Posterior cingulate gyrus (tissue), 11 donors: ENCODE measurements at regions of chr11 and their contacts with region 1.

Region 1: GRCh38 chr11:34357701-34358257 is at the start of gene ABTB2:
- DNase-seq: peak; percentile 97 to 100 (median 98)

Region 2: GRCh38 chr11:33670250-33671011 is 687.3 kb before region 1 on chr11:
- intact Hi-C with region 1: no loop called
- DNase-seq: no peak

Region 3: DNA sequence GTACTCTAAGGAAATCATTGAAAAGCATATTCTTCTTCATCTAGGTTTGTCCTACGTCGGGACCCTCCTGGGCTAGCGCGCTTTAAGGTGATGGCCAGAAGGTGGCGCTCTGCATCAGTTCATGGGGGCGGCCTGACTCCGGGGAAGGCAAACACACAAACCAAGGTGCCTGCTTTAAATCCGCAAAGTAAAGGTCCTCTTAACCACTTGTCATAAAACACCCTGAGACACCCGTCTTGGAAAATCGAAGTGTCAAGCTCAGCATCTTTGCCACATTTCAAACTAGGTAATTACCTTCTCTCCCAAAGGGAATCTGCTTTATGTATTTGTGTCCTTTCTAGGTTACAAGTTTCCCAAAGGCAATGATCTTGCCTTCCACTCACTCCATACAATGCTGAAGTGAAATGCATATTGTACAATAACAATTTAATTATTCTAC is 499.8 kb before region 1 on chr11:
- intact Hi-C with region 1: loop called (anchors 5 kb)
- DNase-seq: peak; percentile 43 to 95 (median 75)

Region 4: DNA sequence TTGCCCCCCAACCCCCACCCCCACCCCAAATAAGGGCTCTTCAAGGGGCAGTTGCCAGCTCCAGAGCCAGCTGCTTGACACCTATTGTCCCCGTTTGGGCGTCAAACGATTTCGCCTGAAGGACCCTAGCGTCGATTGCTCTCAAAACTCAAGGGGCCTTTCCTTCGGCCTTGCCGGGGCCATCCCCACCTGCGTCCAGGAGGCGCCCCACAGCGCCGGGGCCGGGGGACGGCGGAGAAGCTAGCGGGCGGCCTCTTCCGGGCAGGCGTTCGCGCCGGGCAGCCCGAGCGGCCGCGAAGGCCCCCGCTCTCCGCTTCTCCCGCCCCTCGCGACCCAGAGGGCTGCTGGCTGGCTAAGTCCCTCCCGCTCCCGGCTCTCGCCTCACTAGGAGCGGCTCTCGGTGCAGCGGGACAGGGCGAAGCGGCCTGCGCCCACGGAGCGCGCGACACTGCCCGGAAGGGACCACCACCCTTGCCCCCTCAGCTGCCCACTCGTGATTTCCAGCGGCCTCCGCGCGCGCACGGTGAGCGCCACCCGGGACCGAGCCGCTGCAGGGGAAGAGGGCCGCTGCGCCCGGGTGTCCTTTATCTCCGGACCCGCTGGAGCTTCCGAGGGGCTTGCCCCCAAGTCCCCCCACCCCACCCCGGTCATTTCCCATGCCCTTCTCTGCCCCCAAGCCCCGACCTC is 306.3 kb before region 1 on chr11 and contains the start of gene CAPRIN1:
- intact Hi-C with region 1: loop called (anchors 5 kb)
- DNase-seq: peak; percentile 74 to 98 (median 86)

Region 5: GRCh38 chr11:34105079-34105956 is 252.5 kb before region 1 on chr11 and contains the start of gene NAT10:
- intact Hi-C with region 1: loop called (anchors 5 kb)
- DNase-seq: peak; percentile 91 to 99 (median 93)

Region 6: DNA sequence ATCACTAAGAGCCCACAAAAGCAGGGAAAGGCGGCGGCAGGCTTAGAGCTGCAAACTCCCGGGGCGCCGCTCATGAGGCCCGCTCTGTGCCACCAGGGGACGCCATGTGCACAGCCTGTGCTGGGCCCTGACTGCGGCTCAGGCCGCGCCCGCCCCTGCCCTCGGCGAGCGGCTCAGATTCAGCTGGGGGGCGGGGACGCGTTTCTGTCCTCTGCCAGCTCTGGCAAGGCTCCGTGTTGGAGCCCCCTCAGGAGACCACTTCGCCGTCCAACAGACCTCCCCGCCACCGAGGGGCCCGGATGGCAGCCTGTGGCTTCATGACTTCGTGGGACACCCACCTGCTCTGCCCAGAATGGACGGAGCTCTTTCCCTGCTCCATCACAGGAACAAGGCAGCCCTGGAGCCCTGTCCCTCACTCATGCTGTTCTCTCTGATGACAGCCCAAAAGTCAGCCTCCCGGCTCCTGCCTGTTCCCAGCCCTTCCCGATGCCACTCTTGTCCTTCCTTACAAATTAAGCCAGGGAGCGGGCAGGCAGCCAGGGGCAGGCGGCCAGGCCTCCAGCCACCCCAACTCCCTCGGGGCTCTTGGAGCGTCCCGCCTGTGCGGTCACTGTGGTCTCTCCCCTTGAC is 183.3 kb before region 1 on chr11:
- intact Hi-C with region 1: loop called (anchors 1 kb)
- DNase-seq: peak; percentile 70 to 98 (median 87)

Region 7: DNA sequence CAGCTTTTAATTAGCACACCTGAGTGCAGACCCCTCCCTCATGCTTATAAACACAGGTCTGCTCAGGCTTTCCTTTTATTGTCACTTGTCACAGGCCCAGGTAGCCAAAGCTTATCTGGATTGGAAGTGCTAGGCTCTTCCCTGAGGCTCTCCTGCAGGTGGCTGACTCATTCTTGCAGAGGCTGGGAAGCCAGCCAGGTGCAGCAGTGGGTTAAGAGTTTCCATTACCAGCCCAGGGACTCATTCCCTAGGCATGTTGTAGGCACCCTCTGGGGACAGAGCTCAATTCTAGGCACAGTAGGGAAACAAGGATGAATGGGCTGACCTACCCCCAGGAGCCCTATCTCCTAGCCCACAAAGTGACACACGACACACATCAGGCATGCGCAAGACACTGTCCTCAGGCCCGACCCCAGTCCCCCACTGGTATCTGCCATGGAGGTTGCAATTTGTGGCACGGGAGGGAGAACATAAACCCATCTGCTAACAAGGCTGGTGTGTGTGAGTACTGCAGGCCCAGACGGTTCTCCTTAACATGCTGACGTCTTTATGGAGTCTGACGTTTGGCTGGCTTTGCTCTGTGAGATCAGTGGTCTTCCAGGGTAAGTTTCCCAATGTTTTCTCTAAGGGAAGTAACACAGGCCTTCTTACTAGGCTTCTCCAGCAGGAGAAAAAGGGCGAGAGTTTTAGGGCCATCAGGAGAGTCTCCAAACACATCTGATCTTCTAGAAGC is 94.2 kb before region 1 on chr11:
- intact Hi-C with region 1: loop called (anchors 2 kb)
- DNase-seq: peak in 2 of 10 donors; percentile 37 to 84

Region 8: DNA sequence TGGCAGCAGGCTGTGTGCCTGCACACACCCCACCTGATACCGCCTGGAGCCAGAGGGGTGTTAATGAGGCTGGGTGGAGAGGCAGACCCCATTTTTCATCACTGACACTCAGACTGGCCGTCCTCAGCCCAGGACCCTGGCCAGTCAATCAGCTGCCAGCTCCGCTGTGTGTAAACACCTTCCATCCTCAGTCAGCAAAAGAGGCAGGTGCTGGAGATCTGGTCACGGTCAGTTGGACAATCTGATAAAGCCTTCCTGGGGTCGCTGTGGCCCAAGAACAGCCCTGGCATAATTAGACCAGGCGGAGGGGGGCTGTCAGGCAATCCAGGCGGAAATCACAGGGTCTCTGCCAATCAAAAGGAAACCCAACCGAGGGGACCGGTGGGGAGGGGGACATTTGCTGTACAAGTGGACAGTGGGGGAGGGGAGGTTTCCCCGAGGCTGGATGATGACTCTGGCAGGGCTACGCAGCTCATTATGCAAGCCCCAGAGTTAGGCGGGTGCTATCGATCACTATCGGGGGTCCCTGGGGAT is 72.9 kb before region 1 on chr11:
- intact Hi-C with region 1: no loop called
- DNase-seq: no peak

Region 9: DNA sequence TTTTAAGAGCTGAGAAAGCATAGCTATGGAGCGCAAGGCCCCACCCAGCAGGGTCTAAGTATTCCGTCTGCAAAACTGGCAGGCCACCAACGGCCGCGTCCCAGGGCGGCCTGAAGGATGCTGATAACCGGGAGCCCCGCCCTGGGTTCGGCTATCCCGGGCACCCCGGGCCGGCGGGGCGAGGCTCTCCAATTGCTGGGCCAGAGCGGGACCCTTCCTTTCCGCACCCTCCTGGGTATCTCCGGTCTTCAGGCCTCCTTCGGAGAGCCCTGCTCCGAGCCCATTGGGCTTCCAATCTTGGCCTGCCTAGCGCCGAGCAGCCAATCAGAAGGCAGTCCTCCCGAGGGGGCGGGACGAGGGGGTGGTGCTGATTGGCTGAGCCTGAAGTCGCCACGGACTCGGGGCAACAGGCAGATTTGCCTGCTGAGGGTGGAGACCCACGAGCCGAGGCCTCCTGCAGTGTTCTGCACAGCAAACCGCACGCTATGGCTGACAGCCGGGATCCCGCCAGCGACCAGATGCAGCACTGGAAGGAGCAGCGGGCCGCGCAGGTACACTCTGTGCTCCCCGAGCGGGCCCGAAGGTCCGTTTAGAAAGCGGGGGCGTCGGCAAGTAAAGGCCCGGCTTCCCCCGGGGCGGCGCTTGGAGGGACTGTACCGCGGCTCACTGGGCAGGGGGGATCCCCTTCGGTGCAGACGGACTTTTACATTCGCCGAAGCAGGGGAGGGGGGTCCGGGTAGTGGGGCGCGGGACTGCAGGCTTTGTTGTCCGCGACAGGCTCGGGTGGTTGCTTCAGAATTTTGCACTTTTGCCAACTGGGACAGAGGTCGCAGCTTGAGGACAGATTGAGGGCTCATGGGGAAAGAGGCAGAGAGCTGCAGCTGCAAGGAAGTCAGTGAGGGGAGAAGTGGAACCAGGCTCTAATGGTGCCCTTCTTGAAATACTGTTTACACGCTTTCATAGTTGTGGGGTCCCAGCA is 81.0 kb after region 1 on chr11 and contains the start of gene CAT:
- intact Hi-C with region 1: no loop called
- DNase-seq: peak; percentile 92 to 99 (median 96)